Astrocyte of the cerebellum (primary cell): ENCODE measurements at regions of chr15 and their contacts with region 1.

Region 1: GRCh38 chr15:48614051-48614450 is 31.5 kb downstream of the FBN1 start:
- DNase-seq: no peak
- H3K4me3 ChIP-seq: no peak overlapping the region
- CTCF ChIP-seq: no peak

Region 2: DNA sequence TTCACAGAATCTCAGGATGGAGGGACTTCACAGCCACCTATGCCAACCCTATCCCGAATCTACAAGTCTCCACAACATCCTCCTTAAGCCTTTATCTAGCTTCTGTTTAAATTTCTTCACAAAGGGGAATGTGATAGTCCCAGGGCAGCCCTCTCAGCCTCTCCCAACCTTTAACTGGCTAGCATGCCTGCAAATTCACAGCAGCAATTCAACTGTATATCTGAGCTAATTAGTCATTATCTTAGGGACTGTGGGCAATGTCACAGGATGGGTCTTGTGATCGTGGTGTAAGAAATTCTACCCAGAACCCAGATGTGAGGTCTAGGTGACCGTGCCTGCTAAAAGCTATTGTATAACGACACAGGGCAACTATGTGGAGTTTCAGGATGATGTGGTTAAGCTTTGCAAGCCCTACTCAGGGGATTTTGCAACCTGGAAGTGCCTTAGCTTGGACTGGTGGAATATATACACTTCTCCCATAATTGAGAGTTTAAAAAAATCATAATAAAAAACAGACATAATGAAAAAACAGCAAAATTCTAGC is 97.0 kb after region 1 on chr15:
- in situ Hi-C with region 1: loop called (anchors 5 kb)
- DNase-seq: no peak
- H3K4me3 ChIP-seq: no peak overlapping the region
- CTCF ChIP-seq: no peak

Region 3: DNA sequence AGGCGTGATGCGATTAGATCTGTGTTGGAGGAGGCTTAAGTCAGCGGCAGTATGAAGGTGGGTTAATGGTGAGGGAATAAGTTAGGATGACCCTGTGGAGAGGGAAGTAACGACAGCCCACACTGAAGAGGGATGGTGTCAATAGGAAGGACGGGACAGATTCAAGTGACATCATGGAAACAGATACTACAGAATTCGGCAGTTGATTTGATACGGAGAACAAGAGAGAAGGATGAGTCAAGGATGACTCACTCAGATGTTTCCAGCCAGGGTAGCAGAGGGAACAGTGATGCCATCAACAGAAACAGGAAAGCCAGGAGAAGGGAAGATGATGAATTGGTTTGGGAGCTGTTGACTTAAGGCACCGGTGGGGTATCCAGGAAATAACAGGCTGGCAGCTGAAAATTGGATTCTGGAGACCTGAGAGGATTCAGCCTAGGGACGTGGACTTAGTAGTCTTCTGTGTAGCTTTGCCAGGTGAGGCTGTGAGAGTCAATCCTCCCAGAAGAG is 311.7 kb after region 1 on chr15:
- in situ Hi-C with region 1: no loop called
- DNase-seq: peak; percentile 53
- H3K4me3 ChIP-seq: no peak overlapping the region
- CTCF ChIP-seq: no peak